MCF 10A (cell line): ENCODE measurements at regions of chrX and their contacts with region 1.

Region 1: GRCh38 chrX:118495061-118495921 is at the start of gene DOCK11:
- DNase-seq: peak; percentile 63
- H3K4me3 Mint-ChIP-seq: peak within 1 kb of the TSS; percentile 74
- H3K27ac Mint-ChIP-seq: no peak within 1 kb of the TSS
- H3K4me1 Mint-ChIP-seq: no peaks in the 10 kb centered on the region
- H3K27me3 Mint-ChIP-seq: no peaks in the 10 kb centered on the region
- CTCF ChIP-seq: no peak
- total RNA-seq, gene DOCK11: 1.9 and 3.1 TPM in 2 replicates

Region 2: GRCh38 chrX:118552121-118552900 is 57.0 kb after region 1 on chrX:
- CTCF ChIA-PET with region 1: no interaction called
- POLR2A ChIA-PET with region 1: no interaction called
- intact Hi-C with region 1: loop called (anchors 5 kb)
- DNase-seq: peak; percentile 82
- H3K4me3 Mint-ChIP-seq: no peak overlapping the region
- H3K27ac Mint-ChIP-seq: peak overlapping the region; percentile 31
- H3K4me1 Mint-ChIP-seq: peaks cover 6% of the 10 kb centered on the region
- H3K27me3 Mint-ChIP-seq: peaks cover 26% of the 10 kb centered on the region
- CTCF ChIP-seq: no peak

Region 3: DNA sequence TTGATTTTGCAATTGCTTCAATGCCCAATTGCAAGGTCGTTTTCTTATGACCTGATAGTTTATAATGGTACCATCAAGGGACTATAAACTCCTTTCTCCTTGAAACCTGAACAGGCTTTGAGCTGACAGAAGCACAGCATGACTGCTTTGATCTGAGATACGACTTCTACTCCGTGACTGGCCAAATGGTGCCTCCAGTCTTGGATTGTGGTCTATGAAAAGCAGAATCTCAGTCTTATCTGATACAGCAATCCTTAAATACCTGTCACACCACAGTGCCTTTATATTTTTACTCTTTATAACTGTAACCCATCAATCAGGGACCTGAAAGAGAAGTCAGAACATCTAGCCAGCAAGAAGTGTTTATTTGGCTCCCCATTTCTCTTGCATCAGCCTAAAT is 93.4 kb after region 1 on chrX:
- CTCF ChIA-PET with region 1: no interaction called
- POLR2A ChIA-PET with region 1: no interaction called
- intact Hi-C with region 1: no loop called
- DNase-seq: no peak
- H3K4me3 Mint-ChIP-seq: no peak overlapping the region
- H3K27ac Mint-ChIP-seq: no peak overlapping the region
- H3K4me1 Mint-ChIP-seq: no peaks in the 10 kb centered on the region
- H3K27me3 Mint-ChIP-seq: peaks cover 22% of the 10 kb centered on the region
- CTCF ChIP-seq: no peak

Region 4: DNA sequence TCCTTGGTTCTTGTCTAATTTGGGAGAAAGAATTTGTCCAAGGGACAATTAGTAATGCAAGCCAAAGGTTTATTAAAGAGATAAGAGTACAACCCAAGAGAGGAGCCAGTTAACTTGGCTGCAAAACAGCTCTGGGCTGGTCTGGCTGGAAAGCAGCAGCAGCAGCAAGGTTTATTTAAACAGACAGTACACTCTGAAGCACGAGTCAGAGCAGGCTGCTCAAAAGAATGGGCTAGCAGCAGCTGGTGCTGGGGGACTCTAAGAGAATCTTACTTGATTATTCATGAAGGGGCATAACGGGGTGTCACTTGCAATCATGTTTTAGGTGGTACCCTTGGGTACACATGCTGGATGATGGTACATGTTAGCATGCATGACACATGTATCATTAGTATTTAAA is 560.4 kb after region 1 on chrX:
- CTCF ChIA-PET with region 1: no interaction called
- POLR2A ChIA-PET with region 1: no interaction called
- intact Hi-C with region 1: no loop called
- DNase-seq: no peak
- H3K4me3 Mint-ChIP-seq: no peak overlapping the region
- H3K27ac Mint-ChIP-seq: no peak overlapping the region
- H3K4me1 Mint-ChIP-seq: no peaks in the 10 kb centered on the region
- H3K27me3 Mint-ChIP-seq: peaks cover 45% of the 10 kb centered on the region
- CTCF ChIP-seq: no peak